ENCODE measurements at regions of chr1 and their contacts with region 1.

Region 1: GRCh38 chr1:162091681-162092524 is 22.4 kb downstream of the NOS1AP start:
- DNase-seq: no peak
- H3K4me3 Mint-ChIP-seq: no peak overlapping the region
- H3K27ac Mint-ChIP-seq: peak overlapping the region; percentile 14
- H3K4me1 Mint-ChIP-seq: peaks cover 44% of the 10 kb centered on the region
- H3K27me3 Mint-ChIP-seq: no peaks in the 10 kb centered on the region
- CTCF ChIP-seq: no peak

Region 2: GRCh38 chr1:162011337-162012012 is 80.4 kb before region 1 on chr1:
- CTCF ChIA-PET with region 1: no interaction called
- intact Hi-C with region 1: no loop called
- DNase-seq: no peak
- H3K4me3 Mint-ChIP-seq: no peak overlapping the region
- H3K27ac Mint-ChIP-seq: no peak overlapping the region
- H3K4me1 Mint-ChIP-seq: no peaks in the 10 kb centered on the region
- H3K27me3 Mint-ChIP-seq: peaks cover 87% of the 10 kb centered on the region
- CTCF ChIP-seq: no peak

Region 3: GRCh38 chr1:162128693-162129356 is 36.9 kb after region 1 on chr1:
- CTCF ChIA-PET with region 1: no interaction called
- intact Hi-C with region 1: loop called (anchors 5 kb)
- DNase-seq: no peak
- H3K4me3 Mint-ChIP-seq: no peak overlapping the region
- H3K27ac Mint-ChIP-seq: no peak overlapping the region
- H3K4me1 Mint-ChIP-seq: peaks cover 34% of the 10 kb centered on the region
- H3K27me3 Mint-ChIP-seq: no peaks in the 10 kb centered on the region
- CTCF ChIP-seq: no peak

Region 4: DNA sequence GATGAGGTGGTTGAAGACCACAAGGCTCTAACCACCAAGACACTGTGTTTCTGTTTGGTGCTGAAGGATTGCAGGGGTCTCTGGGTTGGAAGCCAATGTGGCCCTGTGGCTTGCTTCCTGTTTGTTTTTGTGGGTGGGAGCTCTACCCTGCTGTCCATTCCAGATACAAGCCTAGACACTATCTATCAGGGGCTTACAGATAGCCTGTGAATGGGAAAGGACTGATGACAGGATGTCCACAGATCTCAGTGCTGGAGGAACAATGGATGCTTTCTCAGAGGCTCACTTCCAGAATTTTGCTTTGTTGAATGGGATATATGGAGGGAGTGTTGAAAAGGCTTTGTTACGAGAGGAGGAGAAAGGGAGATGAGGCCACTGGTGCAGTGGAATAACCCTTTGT is 47.3 kb after region 1 on chr1:
- CTCF ChIA-PET with region 1: no interaction called
- intact Hi-C with region 1: no loop called
- DNase-seq: no peak
- H3K4me3 Mint-ChIP-seq: no peak overlapping the region
- H3K27ac Mint-ChIP-seq: no peak overlapping the region
- H3K4me1 Mint-ChIP-seq: peaks cover 62% of the 10 kb centered on the region
- H3K27me3 Mint-ChIP-seq: no peaks in the 10 kb centered on the region
- CTCF ChIP-seq: no peak